Mammary epithelial cell (primary cell): ENCODE measurements at regions of chr11 and their contacts with region 1.

Region 1: GRCh38 chr11:109946322-109946846 is 146.8 kb upstream of the ZC3H12C start:
- DNase-seq: peak; percentile 87
- H3K4me3 ChIP-seq: peak overlapping the region; percentile 18 to 35 (median 29)
- H3K27ac ChIP-seq: peak overlapping the region; percentile 95
- H3K4me1 ChIP-seq: peaks cover 4% of the 10 kb centered on the region
- H3K27me3 ChIP-seq: no peaks in the 10 kb centered on the region
- CTCF ChIP-seq: peak; percentile 95 to 99

Region 2: DNA sequence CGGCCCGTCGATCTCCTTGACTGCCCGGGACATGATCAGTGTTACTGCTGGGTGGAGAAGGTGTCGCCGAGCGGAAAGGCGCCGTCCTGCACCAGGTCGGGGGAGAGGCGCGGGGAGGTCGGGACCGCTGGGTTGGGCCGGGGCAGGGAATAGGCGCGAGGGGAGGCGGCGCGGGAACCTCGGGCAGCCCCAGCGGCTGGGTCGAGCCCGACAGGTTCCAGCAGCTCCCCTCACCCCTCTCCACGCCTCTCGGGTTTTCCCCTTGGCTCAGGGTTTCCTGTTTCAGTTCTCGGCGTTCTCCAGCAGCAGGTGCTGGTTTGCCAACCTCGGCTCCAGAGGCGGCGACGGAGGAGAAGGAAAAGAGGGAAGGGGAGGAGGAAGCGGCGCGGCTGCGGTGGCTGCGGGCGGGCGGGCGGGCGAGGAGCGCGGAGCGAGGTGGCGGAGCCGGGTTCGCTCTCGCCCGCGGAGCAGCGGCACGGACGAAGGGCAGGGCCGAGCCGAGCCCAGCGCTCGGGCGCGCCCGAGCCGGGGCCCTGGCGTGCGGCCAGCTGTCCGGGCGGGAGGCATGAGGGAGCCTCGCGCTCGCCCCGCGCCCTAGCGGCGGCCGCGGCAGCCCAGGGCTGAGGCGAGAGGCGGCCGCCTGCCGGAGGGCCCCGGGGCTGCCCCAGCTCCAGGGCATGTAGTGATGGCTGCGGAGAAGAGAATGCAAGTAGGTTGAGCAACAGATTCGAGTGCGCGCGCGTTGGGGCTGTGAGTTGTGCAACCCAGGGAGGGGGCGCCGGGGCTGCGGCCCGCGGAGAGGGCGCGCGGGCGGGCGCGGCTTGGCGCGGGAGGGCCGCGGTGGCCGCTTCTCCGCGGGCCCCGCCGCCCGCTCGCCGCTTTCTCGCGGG is 146.4 kb after region 1 on chr11 and contains the start of gene ZC3H12C:
- CTCF ChIA-PET with region 1: no interaction called
- dilution Hi-C with region 1: no loop called
- in situ Hi-C with region 1: loop called in 1 of 2 experiments (anchors 10 kb)
- intact Hi-C with region 1: loop called (anchors 1 kb)
- DNase-seq: peak; percentile 95
- H3K4me3 ChIP-seq: peak within 1 kb of the TSS; percentile 73 to 87 (median 74)
- H3K27ac ChIP-seq: peak within 1 kb of the TSS; percentile 90
- H3K4me1 ChIP-seq: peaks cover 39% of the 10 kb centered on the region
- H3K27me3 ChIP-seq: no peaks in the 10 kb centered on the region
- CTCF ChIP-seq: peak; percentile 8 to 62
- total RNA-seq, gene ZC3H12C: 16.0 to 26.9 TPM

Region 3: GRCh38 chr11:110165039-110165925 is 218.9 kb after region 1 on chr11:
- CTCF ChIA-PET with region 1: no interaction called
- dilution Hi-C with region 1: no loop called
- in situ Hi-C with region 1: no loop called
- intact Hi-C with region 1: loop called (anchors 1 kb)
- DNase-seq: no peak
- H3K4me3 ChIP-seq: no peak overlapping the region
- H3K27ac ChIP-seq: no peak overlapping the region
- H3K4me1 ChIP-seq: no peaks in the 10 kb centered on the region
- H3K27me3 ChIP-seq: no peaks in the 10 kb centered on the region
- CTCF ChIP-seq: no peak

Region 4: DNA sequence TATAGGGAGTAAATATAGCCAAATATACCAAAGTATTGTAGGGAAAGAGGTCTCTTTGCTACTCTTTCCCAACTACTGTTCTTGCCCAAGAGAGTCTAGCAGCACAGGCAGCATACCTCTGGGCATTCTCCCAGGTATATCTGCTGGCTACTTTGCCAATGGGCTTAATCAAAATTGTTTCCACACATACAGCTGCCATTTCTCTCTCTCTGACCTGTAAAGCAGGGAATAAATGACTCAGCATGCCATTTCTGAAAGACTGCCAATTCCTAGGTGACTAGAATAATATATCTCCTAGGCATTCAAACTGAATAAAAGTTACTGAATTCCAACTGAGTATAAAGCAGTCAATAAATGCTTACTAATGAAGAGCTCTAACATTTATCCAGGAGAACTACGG is 305.5 kb after region 1 on chr11:
- CTCF ChIA-PET with region 1: no interaction called
- dilution Hi-C with region 1: no loop called
- in situ Hi-C with region 1: no loop called
- intact Hi-C with region 1: loop called (anchors 1 kb)
- DNase-seq: peak; percentile 87
- H3K4me3 ChIP-seq: no peak overlapping the region
- H3K27ac ChIP-seq: peak overlapping the region; percentile 10
- H3K4me1 ChIP-seq: peaks cover 6% of the 10 kb centered on the region
- H3K27me3 ChIP-seq: no peaks in the 10 kb centered on the region
- CTCF ChIP-seq: no peak

Region 5: GRCh38 chr11:110366291-110366690 is 419.9 kb after region 1 on chr11:
- CTCF ChIA-PET with region 1: no interaction called
- dilution Hi-C with region 1: no loop called
- in situ Hi-C with region 1: loop called (anchors 10 to 25 kb)
- intact Hi-C with region 1: loop called (anchors 1 kb)
- DNase-seq: peak; percentile 35
- H3K4me3 ChIP-seq: no peak overlapping the region
- H3K27ac ChIP-seq: no peak overlapping the region
- H3K4me1 ChIP-seq: peaks cover 9% of the 10 kb centered on the region
- H3K27me3 ChIP-seq: no peaks in the 10 kb centered on the region
- CTCF ChIP-seq: no peak

Region 6: DNA sequence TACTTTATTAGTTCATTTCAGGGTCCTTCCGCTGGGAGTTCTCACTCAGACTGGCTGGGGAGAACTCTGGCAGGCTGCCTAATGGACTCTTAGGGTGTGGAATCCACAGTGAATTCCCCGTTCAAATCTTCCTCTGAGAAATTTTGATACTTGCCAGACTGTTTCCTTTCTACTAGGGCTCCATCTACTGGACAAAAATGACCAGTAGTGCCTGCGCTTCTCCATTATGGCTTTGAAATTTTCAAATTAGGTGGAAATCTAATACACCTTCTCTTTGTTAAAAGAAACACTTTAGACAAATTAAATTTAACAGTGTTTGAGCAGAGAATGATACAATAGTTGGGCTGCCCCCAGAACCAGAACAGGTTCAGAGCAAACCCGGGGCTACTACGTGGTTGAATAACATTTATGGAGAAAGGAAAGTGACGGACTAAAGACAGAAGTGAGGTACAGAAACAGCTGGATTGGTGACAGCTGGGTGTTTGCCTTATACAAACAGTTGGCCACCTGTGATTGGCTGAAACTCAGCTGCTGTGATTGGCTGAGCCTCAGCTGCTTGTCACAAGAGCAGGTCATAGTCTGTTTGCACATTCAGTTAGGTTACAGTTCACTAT is 430.4 kb after region 1 on chr11:
- CTCF ChIA-PET with region 1: no interaction called
- dilution Hi-C with region 1: no loop called
- in situ Hi-C with region 1: loop called (anchors 10 to 25 kb)
- intact Hi-C with region 1: loop called (anchors 1 kb)
- DNase-seq: peak; percentile 79
- H3K4me3 ChIP-seq: peak overlapping the region; percentile 26 to 48 (median 40)
- H3K27ac ChIP-seq: no peak overlapping the region
- H3K4me1 ChIP-seq: peaks cover 14% of the 10 kb centered on the region
- H3K27me3 ChIP-seq: no peaks in the 10 kb centered on the region
- CTCF ChIP-seq: peak; percentile 72 to 82

Region 7: DNA sequence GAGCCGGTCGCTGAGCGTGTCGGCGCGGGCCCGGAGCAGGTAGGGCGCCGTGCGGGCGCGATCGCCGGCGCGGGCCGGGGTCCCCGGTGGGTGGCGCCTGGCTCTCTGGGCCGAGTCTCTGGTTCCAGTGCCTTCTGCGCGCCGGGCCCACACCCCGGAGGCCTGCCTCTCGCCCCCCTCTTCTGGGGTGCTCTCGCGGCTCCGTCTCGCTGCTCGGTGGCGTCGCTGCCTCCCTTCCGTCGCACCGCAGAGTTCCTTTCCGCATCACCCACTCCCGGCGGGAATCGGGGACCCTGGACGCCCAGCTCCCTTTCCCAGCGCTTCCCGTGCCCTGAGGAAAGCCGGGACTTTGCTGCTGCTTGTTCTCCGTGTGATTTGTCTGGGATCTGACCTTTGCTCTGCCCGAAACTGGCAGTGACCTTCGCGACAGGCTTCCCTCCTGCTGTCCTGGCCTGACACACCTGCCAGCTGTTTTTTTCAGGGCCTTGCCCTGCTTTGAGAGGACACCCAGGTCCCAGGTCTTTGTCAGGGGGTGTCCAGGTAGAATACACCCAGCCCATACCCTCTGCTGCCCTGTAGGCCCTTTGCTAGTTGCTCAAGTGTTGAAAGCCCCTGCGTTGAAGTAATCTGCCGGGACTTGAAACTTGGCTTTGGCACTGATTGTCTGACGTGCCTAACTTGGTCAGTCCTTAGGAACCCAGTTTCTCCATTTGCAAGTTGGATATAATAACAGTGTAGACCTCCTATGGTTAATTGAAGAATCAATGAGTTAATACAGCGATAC is 484.1 kb after region 1 on chr11:
- CTCF ChIA-PET with region 1: no interaction called
- dilution Hi-C with region 1: no loop called
- in situ Hi-C with region 1: no loop called
- intact Hi-C with region 1: loop called (anchors 1 kb)
- DNase-seq: peak; percentile 74
- H3K4me3 ChIP-seq: peak overlapping the region; percentile 60 to 93 (median 90)
- H3K27ac ChIP-seq: peak overlapping the region; percentile 67
- H3K4me1 ChIP-seq: peaks cover 17% of the 10 kb centered on the region
- H3K27me3 ChIP-seq: no peaks in the 10 kb centered on the region
- CTCF ChIP-seq: no peak